ENCODE measurements at regions of chr6 and their contacts with region 1.

Region 1: GRCh38 chr6:8930009-8930408 is 494.7 kb upstream of the SLC35B3 start:
- DNase-seq: no peak
- H3K4me3 ChIP-seq: no peak overlapping the region
- H3K27ac ChIP-seq: no peak overlapping the region
- H3K4me1 ChIP-seq: no peaks in the 10 kb centered on the region
- H3K27me3 ChIP-seq: no peaks in the 10 kb centered on the region
- CTCF ChIP-seq: no peak
- POLR2A ChIP-seq: no peak

Region 2: DNA sequence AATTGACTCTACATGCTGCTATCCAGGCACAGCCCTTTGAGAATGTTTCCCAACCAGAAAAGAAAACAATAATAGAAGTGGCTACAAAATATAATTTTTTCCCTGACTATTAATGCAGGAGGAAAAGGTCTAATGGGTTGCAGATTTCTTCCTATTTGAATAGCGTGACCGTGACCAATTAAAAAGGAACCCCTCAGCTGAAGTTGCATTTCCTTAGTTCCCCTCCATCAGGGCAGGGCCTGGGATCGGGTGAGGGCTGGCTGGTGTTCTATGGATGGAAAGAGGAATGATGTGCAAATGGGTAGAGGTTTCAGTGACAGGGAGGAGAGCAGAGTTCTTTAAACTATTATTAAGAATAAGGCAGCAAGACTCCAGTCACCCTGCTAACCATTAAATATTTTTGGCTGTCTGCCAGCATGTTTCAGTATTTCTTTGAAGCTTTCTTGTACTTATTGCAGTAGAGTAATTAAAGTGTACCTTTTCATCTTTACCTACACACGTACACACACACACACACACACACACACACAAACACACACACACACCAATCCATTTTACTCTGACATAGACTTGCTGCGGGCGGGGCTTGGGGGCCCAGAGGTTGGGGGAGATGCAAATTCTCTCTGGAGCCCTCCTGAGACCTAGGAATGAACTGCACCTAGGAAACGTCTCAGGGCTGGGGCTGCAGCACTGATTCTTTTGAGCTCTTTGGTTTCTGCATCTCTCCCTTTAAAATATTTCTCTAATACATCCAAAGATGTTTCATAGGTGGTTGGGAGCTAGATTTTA is 339.9 kb before region 1 on chr6:
- intact Hi-C with region 1: no loop called
- DNase-seq: no peak
- H3K4me3 ChIP-seq: no peak overlapping the region
- H3K27ac ChIP-seq: no peak overlapping the region
- H3K4me1 ChIP-seq: no peaks in the 10 kb centered on the region
- H3K27me3 ChIP-seq: no peaks in the 10 kb centered on the region
- CTCF ChIP-seq: no peak
- POLR2A ChIP-seq: no peak

Region 3: GRCh38 chr6:8764733-8765132 is 165.3 kb before region 1 on chr6:
- intact Hi-C with region 1: loop called (anchors 5 kb)
- DNase-seq: no peak
- H3K4me3 ChIP-seq: no peak overlapping the region
- H3K27ac ChIP-seq: no peak overlapping the region
- H3K4me1 ChIP-seq: no peaks in the 10 kb centered on the region
- H3K27me3 ChIP-seq: no peaks in the 10 kb centered on the region
- CTCF ChIP-seq: no peak
- POLR2A ChIP-seq: no peak

Region 4: GRCh38 chr6:8983188-8983688 is 53.2 kb after region 1 on chr6:
- intact Hi-C with region 1: no loop called
- DNase-seq: peak; percentile 38 to 67
- H3K4me3 ChIP-seq: peak overlapping the region in 2 of 3 donors; percentile 4 to 50
- H3K27ac ChIP-seq: no peak overlapping the region
- H3K4me1 ChIP-seq: no peaks in the 10 kb centered on the region
- H3K27me3 ChIP-seq: no peaks in the 10 kb centered on the region
- CTCF ChIP-seq: peak; percentile 52 to 90 (median 87)
- POLR2A ChIP-seq: no peak